ENCODE measurements at regions of chr2 and their contacts with region 1.

Region 1: GRCh38 chr2:71130113-71130904 is at the starts of genes MCEE and MPHOSPH10:
- DNase-seq: peak; percentile 81 to 91 (median 89)
- ATAC-seq: peak; percentile 95
- H3K4me3 ChIP-seq: peak within 1 kb of the TSS; percentile 74
- H3K4me3 Mint-ChIP-seq: no peak within 1 kb of the TSS
- H3K27ac ChIP-seq: peak within 1 kb of the TSS; percentile 87
- H3K27ac Mint-ChIP-seq: peak within 1 kb of the TSS in 1 of 9 donors; percentile 45
- H3K4me1 ChIP-seq: peaks cover 21 to 22% of the 10 kb centered on the region in 2 donors
- H3K4me1 Mint-ChIP-seq: peaks cover 5 to 33% (median 26%) of the 10 kb centered on the region in 7 donors
- H3K27me3 ChIP-seq: no peaks in the 10 kb centered on the region
- H3K27me3 Mint-ChIP-seq: no peaks in the 10 kb centered on the region
- total RNA-seq, gene MCEE: 11.6 to 27.9 (median 16.4) TPM
- total RNA-seq, gene MPHOSPH10: 28.2 to 58.9 (median 43.8) TPM

Region 2: GRCh38 chr2:70994756-70995729 is 135.3 kb before region 1 on chr2 and contains the start of gene TEX261:
- CTCF ChIA-PET with region 1: no interaction called
- POLR2A ChIA-PET with region 1: no interaction called
- intact Hi-C with region 1: loop called (anchors 1 kb)
- DNase-seq: peak; percentile 81 to 97 (median 88)
- ATAC-seq: peak; percentile 98
- H3K4me3 ChIP-seq: peak within 1 kb of the TSS; percentile 92
- H3K4me3 Mint-ChIP-seq: peak within 1 kb of the TSS; percentile 95 to 100 (median 98)
- H3K27ac ChIP-seq: peak within 1 kb of the TSS; percentile 88
- H3K27ac Mint-ChIP-seq: peak within 1 kb of the TSS; percentile 88 to 99 (median 96)
- H3K4me1 ChIP-seq: peaks cover 19 to 21% of the 10 kb centered on the region in 2 donors
- H3K4me1 Mint-ChIP-seq: peaks cover 23 to 44% (median 36%) of the 10 kb centered on the region in 7 donors
- H3K27me3 ChIP-seq: no peaks in the 10 kb centered on the region
- H3K27me3 Mint-ChIP-seq: no peaks in the 10 kb centered on the region
- total RNA-seq, gene TEX261: 33.2 to 66.3 (median 56.4) TPM

Region 3: DNA sequence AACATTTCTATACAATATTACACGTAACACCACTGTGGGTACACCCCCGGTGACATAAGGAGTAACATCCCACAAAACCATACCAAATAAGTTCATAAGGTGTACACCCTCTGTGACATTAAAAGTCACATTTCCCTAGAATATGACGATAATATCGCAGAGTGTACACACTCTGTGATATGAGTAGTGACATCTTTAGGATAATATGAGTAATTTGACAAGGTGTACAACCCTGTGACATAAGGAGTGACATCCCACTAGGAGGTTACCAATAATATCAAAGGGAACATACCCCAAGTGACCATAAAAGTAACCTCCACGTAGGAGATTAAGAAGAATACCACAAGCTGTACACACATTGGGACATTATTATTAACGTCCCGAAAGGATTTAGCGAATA is 111.7 kb before region 1 on chr2:
- CTCF ChIA-PET with region 1: no interaction called
- POLR2A ChIA-PET with region 1: no interaction called
- intact Hi-C with region 1: loop called in 1 of 2 experiments (anchors 2 kb)
- DNase-seq: no peak
- ATAC-seq: peak; percentile 20
- H3K4me3 ChIP-seq: no peak overlapping the region
- H3K4me3 Mint-ChIP-seq: no peak overlapping the region
- H3K27ac ChIP-seq: no peak overlapping the region
- H3K27ac Mint-ChIP-seq: no peak overlapping the region
- H3K4me1 ChIP-seq: no peaks in the 10 kb centered on the region
- H3K4me1 Mint-ChIP-seq: peaks cover 4 to 7% (median 7%) of the 10 kb centered on the region in 7 donors
- H3K27me3 ChIP-seq: no peaks in the 10 kb centered on the region
- H3K27me3 Mint-ChIP-seq: peaks cover 0 to 6% (median 0%) of the 10 kb centered on the region in 5 donors

Region 4: DNA sequence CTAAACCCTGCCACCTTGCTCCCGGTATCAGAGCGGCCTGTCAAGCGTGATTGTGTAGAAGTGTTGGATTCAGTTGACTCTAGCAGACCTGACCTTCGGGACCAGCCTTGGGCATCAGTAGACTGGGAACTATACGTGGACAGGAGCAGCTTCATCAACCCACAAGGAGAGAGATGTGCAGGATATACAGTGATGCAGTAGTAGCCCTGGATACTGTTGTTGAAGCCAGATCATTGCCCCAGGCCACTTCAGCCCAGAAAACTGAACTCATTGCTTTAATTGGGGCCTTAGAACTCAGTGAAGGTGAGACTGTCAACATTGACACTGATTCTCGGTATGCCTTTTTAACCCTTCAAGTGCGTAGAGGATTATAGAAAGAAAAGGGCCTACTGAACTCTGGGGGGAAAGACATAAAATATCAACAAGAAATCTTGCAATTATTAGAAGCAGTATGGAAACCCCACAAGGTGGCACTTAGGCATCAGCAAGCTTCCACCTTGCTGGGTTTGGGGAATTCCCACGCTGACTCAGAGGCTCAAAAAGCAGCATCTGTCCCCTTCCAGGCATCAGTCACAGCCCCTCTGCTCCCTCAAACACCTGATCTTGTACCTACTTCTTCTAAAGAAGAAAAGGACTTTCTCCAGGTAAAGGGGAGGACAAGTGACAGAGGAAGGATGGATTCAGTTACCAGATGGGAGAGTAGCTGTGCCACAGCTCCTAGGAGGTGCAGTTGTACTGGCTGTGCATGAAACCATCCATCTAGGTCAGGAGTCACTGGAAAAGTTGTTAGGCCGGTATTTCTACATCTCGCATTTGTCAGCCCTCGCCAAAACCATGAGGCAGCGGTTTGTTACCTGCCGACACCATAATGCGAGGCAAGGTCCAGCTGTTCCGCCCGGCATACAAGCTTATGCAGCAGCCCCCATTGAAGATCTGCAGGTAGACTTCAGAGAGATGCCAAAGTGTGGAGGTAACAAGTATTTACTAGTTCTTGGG is 80.6 kb before region 1 on chr2:
- CTCF ChIA-PET with region 1: no interaction called
- POLR2A ChIA-PET with region 1: no interaction called
- intact Hi-C with region 1: loop called in 1 of 2 experiments (anchors 1 kb)
- DNase-seq: peak in 2 of 9 donors; percentile 32 to 43
- ATAC-seq: no peak
- H3K4me3 ChIP-seq: no peak overlapping the region
- H3K4me3 Mint-ChIP-seq: no peak overlapping the region
- H3K27ac ChIP-seq: no peak overlapping the region
- H3K27ac Mint-ChIP-seq: peak overlapping the region in 2 of 9 donors; percentile 10 to 43
- H3K4me1 ChIP-seq: no peaks in the 10 kb centered on the region
- H3K4me1 Mint-ChIP-seq: peaks cover 0 to 9% (median 0%) of the 10 kb centered on the region in 7 donors
- H3K27me3 ChIP-seq: no peaks in the 10 kb centered on the region
- H3K27me3 Mint-ChIP-seq: peaks cover 0 to 5% (median 0%) of the 10 kb centered on the region in 5 donors

Region 5: DNA sequence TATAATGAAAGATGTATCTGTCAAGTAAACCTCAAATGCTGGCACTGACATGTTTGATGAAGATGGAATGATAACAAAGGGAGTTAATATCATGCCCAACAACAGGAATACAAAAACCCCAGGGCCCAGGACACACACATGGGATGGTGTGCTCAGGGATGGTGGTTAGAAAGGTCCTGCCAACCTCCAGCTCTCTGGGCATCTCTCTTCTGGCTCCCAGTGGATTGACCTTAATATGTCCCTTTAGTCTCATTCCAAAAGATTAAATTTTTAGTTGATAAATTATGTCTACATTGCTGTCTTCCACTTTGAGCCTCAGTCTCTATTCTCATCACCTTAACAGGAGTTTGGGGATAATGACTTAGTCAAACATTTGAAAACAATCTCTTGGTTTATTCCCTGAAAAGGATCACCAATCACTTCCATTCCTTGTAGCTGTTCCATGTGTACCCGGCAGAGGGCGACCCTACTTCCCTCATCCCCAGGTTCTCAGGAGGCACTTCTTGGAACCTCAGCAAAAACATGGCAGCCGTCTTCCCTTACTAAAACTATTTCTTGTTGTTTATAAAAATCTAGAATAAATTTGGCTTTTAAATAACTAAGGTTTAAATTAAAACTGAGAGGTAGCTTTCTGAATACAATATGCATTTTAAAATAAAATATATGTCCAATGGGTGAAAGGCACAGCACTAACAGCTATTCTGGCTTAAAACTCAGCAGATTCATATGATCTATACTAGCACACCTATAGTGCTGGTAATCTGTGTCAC is 29.9 kb before region 1 on chr2:
- CTCF ChIA-PET with region 1: no interaction called
- POLR2A ChIA-PET with region 1: interaction called, 8 read pairs
- intact Hi-C with region 1: loop called in 1 of 2 experiments (anchors 1 kb)
- DNase-seq: peak in 8 of 9 donors; percentile 3 to 44 (median 16)
- ATAC-seq: peak; percentile 79
- H3K4me3 ChIP-seq: no peak overlapping the region
- H3K4me3 Mint-ChIP-seq: no peak overlapping the region
- H3K27ac ChIP-seq: no peak overlapping the region
- H3K27ac Mint-ChIP-seq: no peak overlapping the region
- H3K4me1 ChIP-seq: no peaks in the 10 kb centered on the region
- H3K4me1 Mint-ChIP-seq: peaks cover 0 to 7% (median 0%) of the 10 kb centered on the region in 7 donors
- H3K27me3 ChIP-seq: no peaks in the 10 kb centered on the region
- H3K27me3 Mint-ChIP-seq: peaks cover 0 to 13% (median 4%) of the 10 kb centered on the region in 5 donors

Region 6: GRCh38 chr2:71276311-71277146 is 146.2 kb after region 1 on chr2:
- CTCF ChIA-PET with region 1: no interaction called
- POLR2A ChIA-PET with region 1: no interaction called
- intact Hi-C with region 1: loop called in 1 of 2 experiments (anchors 1 kb)
- DNase-seq: peak; percentile 70 to 92 (median 84)
- ATAC-seq: peak; percentile 100
- H3K4me3 ChIP-seq: peak overlapping the region; percentile 67
- H3K4me3 Mint-ChIP-seq: peak overlapping the region; percentile 39 to 85 (median 76)
- H3K27ac ChIP-seq: no peak overlapping the region
- H3K27ac Mint-ChIP-seq: no peak overlapping the region
- H3K4me1 ChIP-seq: peaks cover 4 to 16% of the 10 kb centered on the region in 2 donors
- H3K4me1 Mint-ChIP-seq: peaks cover 10 to 18% (median 13%) of the 10 kb centered on the region in 7 donors
- H3K27me3 ChIP-seq: peaks cover 11 to 15% of the 10 kb centered on the region in 2 donors
- H3K27me3 Mint-ChIP-seq: peaks cover 78 to 89% (median 86%) of the 10 kb centered on the region in 5 donors